A673 (cell line): ENCODE measurements at regions of chr2 and their contacts with region 1.

Region 1: GRCh38 chr2:20962939-20963557 is 80.8 kb downstream of the APOB start:
- DNase-seq: peak; percentile 63
- H3K4me3 ChIP-seq: no peak overlapping the region
- H3K27ac ChIP-seq: no peak overlapping the region
- H3K4me1 ChIP-seq: no peaks in the 10 kb centered on the region
- H3K27me3 ChIP-seq: peaks cover 91% of the 10 kb centered on the region
- CTCF ChIP-seq: peak; percentile 91

Region 2: GRCh38 chr2:20781656-20782265 is 181.3 kb before region 1 on chr2:
- CTCF ChIA-PET with region 1: interaction called, 14 read pairs
- POLR2A ChIA-PET with region 1: no interaction called
- intact Hi-C with region 1: loop called (anchors 1 kb)
- DNase-seq: peak; percentile 38
- H3K4me3 ChIP-seq: no peak overlapping the region
- H3K27ac ChIP-seq: no peak overlapping the region
- H3K4me1 ChIP-seq: no peaks in the 10 kb centered on the region
- H3K27me3 ChIP-seq: no peaks in the 10 kb centered on the region
- CTCF ChIP-seq: peak; percentile 77